ENCODE measurements at regions of chr15 and their contacts with region 1.

Region 1: GRCh38 chr15:95826412-95827195 is 503.9 kb upstream of the NR2F2 start:
- DNase-seq: peak; percentile 26
- H3K4me3 ChIP-seq: no peak overlapping the region
- H3K27ac ChIP-seq: no peak overlapping the region
- H3K4me1 ChIP-seq: no peaks in the 10 kb centered on the region
- H3K27me3 ChIP-seq: peaks cover 3% of the 10 kb centered on the region
- CTCF ChIP-seq: peak; percentile 31 to 64

Region 2: GRCh38 chr15:95884276-95884675 is 57.7 kb after region 1 on chr15:
- CTCF ChIA-PET with region 1: no interaction called
- dilution Hi-C with region 1: loop called (anchors 5 kb)
- in situ Hi-C with region 1: no loop called
- intact Hi-C with region 1: no loop called
- DNase-seq: no peak
- H3K4me3 ChIP-seq: no peak overlapping the region
- H3K27ac ChIP-seq: no peak overlapping the region
- H3K4me1 ChIP-seq: peaks cover 4% of the 10 kb centered on the region
- H3K27me3 ChIP-seq: no peaks in the 10 kb centered on the region
- CTCF ChIP-seq: no peak

Region 3: DNA sequence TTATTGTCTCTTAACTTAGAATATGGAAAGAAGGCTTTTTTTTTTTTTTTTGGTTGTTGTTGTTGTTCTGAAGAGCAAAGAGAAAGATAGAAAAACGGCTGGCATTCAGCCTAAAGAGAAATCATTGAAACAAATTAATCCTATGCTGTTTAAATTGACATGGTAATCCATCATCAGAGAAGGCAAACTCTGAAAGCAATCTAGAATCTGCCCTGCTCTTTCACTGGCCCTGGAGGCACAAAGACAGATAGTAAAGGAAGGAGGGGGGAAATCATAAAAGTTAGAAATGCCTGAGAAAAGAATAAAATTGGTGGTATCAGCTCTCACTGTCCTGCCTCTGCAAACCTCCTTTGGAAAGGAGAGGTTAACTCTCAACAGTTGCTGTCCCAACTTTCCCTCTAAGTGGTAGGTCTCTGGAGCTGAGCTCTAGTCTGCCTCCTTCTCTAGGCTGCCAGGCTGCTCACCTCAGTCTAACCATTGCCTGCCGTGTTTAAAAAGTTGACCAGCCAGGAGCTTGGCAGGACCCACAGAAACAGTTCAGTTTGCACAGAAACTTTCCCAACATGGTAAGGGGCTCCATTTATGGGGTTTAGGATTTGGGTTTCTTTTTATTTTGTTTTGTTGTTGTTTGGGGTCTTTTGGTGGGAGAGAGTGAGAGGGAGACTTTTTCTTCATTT is 490.5 kb after region 1 on chr15:
- CTCF ChIA-PET with region 1: no interaction called
- dilution Hi-C with region 1: no loop called
- in situ Hi-C with region 1: no loop called
- intact Hi-C with region 1: no loop called
- DNase-seq: no peak
- H3K4me3 ChIP-seq: no peak overlapping the region
- H3K27ac ChIP-seq: no peak overlapping the region
- H3K4me1 ChIP-seq: peaks cover 23% of the 10 kb centered on the region
- H3K27me3 ChIP-seq: no peaks in the 10 kb centered on the region
- CTCF ChIP-seq: no peak